ENCODE measurements at regions of chr20 and their contacts with region 1.

Region 1: DNA sequence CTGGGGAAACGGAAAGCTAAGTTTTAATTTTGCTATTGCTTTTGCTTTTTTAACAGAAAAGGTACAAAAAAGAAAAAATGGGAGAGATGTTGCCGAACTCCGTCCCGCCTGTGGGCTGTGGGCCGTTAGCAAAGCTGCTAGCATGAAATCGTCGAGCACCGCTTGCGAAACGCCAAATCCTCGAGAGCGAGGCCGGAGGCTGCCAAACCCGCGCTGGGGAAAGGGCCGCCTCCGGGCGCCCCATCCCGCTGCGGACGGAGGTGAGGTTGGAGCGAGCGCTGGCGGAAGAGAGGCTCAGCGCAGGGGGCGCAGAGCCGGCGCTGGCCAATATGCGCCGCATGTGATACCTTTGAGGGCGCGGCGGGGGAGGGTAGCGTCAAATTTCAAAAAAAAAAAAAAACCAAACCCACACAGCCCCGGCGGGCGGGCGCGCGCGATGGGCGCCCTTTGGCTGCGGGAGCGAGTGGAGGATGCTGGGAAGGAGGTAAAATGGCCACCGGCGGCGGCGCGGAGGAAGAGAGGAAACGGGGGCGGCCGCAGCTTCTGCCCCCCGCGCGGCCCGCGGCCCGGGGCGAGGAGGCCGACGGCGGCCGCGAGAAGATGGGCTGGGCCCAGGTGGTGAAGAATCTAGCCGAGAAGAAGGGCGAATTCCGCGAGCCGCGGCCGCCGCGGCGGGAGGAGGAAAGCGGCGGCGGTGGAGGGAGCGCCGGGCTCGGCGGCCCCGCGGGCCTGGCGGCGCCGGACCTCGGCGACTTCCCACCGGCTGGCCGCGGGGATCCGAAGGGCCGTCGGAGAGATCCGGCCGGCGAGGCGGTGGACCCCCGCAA is at the start of gene ZCCHC3:
- DNase-seq: peak; percentile 93 to 96
- H3K4me3 ChIP-seq: peak within 1 kb of the TSS; percentile 64
- H3K4me3 Mint-ChIP-seq: peak within 1 kb of the TSS; percentile 95
- H3K27ac Mint-ChIP-seq: peak within 1 kb of the TSS; percentile 99
- H3K4me1 ChIP-seq: peaks cover 19% of the 10 kb centered on the region; the same call in 1 of the 2 replicates
- H3K4me1 Mint-ChIP-seq: peaks cover 13% of the 10 kb centered on the region
- H3K27me3 ChIP-seq: no peaks in the 10 kb centered on the region
- H3K27me3 Mint-ChIP-seq: no peaks in the 10 kb centered on the region
- CTCF ChIP-seq: peak in 1 of 2 experiments; percentile 32
- total RNA-seq, gene ZCCHC3: 34.4 and 37.2 TPM in 2 replicates

Region 2: DNA sequence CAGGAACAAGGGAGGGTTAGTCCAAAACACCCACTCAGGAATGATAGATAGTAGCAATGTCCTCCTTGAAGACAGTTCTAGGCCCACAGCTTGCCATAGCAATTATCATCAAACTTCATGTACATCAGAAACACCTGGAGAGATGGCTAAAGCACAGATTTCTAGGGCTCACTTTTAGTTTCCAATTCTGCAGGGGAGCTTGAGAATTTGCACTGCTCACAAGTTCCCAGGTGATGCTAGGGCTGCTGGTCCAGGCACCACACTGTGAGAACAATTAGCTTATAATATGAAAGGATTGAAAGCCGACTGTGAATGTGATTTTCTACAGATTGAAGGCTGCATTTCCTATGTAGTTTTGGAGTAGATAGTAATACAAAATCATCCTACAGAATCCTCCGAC is 151.4 kb before region 1 on chr20:
- CTCF ChIA-PET with region 1: no interaction called
- POLR2A ChIA-PET with region 1: no interaction called
- intact Hi-C with region 1: no loop called
- DNase-seq: no peak
- H3K4me3 ChIP-seq: no peak overlapping the region
- H3K4me3 Mint-ChIP-seq: no peak overlapping the region
- H3K27ac Mint-ChIP-seq: no peak overlapping the region
- H3K4me1 ChIP-seq: no peaks in the 10 kb centered on the region
- H3K4me1 Mint-ChIP-seq: no peaks in the 10 kb centered on the region
- H3K27me3 ChIP-seq: peaks cover 1% of the 10 kb centered on the region; the same call in 1 of the 2 replicates
- H3K27me3 Mint-ChIP-seq: peaks cover 16% of the 10 kb centered on the region
- CTCF ChIP-seq: no peak

Region 3: GRCh38 chr20:324177-325044 is 27.1 kb after region 1 on chr20:
- CTCF ChIA-PET with region 1: no interaction called
- POLR2A ChIA-PET with region 1: interaction called, 12 read pairs
- intact Hi-C with region 1: loop called (anchors 1 kb)
- DNase-seq: peak; percentile 90 to 95
- H3K4me3 ChIP-seq: peak overlapping the region; percentile 59
- H3K4me3 Mint-ChIP-seq: peak overlapping the region; percentile 94
- H3K27ac Mint-ChIP-seq: peak overlapping the region; percentile 87
- H3K4me1 ChIP-seq: 0 out of 2 replicates have a peak, but pooled peaks cover 10% of the 10 kb centered on the region
- H3K4me1 Mint-ChIP-seq: peaks cover 8% of the 10 kb centered on the region
- H3K27me3 ChIP-seq: no peaks in the 10 kb centered on the region
- H3K27me3 Mint-ChIP-seq: peaks cover 4% of the 10 kb centered on the region
- CTCF ChIP-seq: peak; percentile 43 to 47

Measured in Caco-2 (cell line).